Activated naive CD4-positive, alpha-beta T cell treated with anti-CD3 and anti-CD28 coated beads, Interleukin-2, amount 10 ng/mL, durations not matched to agents 7 days and 5 days (primary cell): ENCODE measurements at regions of chr20 and their contacts with region 1.

Region 1: GRCh38 chr20:38165089-38165989 is at the start of gene TGM2:
- DNase-seq: peak; percentile 59
- H3K4me3 Mint-ChIP-seq: no peak within 1 kb of the TSS
- H3K27ac Mint-ChIP-seq: no peak within 1 kb of the TSS
- H3K4me1 Mint-ChIP-seq: peaks cover 23% of the 10 kb centered on the region
- H3K27me3 Mint-ChIP-seq: peaks cover 39% of the 10 kb centered on the region

Region 2: DNA sequence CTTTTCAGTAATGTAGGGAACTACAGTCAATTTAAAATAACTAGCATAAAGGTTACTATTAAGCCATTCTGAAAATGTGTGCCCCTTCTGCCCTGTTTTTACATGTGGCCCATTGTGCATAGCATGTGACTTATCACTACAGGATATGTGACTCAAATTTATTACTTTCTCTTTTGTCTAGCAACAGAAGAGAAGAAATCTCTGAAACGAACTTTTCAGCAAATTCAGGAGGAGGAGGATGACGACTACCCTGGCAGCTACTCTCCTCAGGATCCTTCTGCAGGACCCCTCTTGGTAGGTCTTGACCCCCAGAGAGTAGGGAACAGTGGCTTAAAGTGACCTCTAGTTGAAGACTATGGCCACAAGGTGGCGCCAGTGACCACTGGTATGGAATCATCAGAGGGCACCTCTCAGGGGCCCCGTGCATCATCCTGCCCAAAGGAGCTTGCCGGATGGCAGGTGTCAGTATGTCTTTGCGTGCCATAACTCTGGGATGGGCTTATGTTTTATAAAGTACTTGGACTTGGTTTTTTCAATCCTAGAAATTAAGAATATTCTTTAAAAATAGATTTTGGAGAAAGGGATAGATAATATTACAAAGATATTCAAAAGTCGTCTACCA is 107.9 kb before region 1 on chr20:
- CTCF ChIA-PET with region 1: interaction called, 10 read pairs
- DNase-seq: peak; percentile 83
- H3K4me3 Mint-ChIP-seq: no peak overlapping the region
- H3K27ac Mint-ChIP-seq: peak overlapping the region; percentile 83
- H3K4me1 Mint-ChIP-seq: peaks cover 11% of the 10 kb centered on the region
- H3K27me3 Mint-ChIP-seq: no peaks in the 10 kb centered on the region